Activated CD8-positive, alpha-beta memory T cell treated with anti-CD3 and anti-CD28 coated beads, Interleukin-2, amount 10 ng/mL, durations not matched to agents 7 days and 5 days (primary cell): ENCODE measurements at regions of chr19 and their contacts with region 1.

Region 1: DNA sequence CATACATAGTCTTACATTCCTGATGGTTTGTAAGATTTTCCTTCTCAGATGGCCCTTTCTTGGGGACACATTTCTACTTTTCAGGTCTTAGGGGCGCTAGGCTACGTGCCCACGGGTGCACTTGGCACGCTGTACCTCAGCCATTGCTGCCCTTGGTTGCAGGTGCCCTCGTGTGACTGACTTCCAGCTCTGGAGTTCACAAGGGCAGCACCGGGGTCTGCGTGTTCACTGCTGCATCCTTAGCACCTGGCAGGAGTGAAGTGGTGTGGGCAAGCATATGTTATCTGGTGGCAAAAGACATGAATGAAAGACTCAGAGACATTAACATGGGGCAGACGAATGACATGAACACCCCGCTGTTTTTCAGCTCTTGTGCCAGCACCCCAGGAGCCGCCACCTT is 13.3 kb upstream of the WDR88 start:
- DNase-seq: no peak
- ATAC-seq: no peak
- H3K4me3 Mint-ChIP-seq: no peak overlapping the region
- H3K27ac Mint-ChIP-seq: no peak overlapping the region
- H3K4me1 Mint-ChIP-seq: no peaks in the 10 kb centered on the region
- H3K27me3 Mint-ChIP-seq: no peaks in the 10 kb centered on the region

Region 2: DNA sequence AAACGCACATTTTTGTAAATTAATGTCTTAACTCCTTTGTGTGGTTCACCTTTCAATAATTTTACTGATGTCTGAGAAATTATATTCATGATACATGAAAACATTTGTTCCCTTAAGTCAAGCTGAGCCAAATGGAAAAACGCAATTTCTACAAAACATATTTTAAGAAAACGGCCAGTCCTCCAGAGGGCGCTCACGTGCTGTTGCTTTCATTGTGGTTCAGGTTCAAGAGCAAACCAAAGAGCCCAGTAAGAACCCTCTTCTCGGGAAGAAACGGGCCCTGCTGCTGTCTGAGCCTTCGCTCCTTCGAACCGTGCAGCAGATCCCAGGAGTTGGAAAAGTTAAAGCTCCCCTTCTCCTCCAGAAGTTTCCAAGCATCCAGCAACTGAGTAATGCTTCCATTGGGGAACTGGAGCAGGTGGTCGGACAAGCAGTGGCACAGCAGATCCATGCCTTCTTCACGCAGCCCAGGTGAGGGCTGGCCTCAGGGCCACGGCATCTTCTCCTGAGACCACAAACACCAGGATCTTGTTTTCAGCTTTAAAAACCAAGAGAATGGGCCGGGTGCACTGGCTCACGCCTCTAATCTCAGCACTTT is 142.3 kb before region 1 on chr19:
- CTCF ChIA-PET with region 1: interaction called, 32 read pairs
- DNase-seq: peak; percentile 84
- ATAC-seq: no peak
- H3K4me3 Mint-ChIP-seq: no peak overlapping the region
- H3K27ac Mint-ChIP-seq: peak overlapping the region; percentile 28
- H3K4me1 Mint-ChIP-seq: peaks cover 20% of the 10 kb centered on the region
- H3K27me3 Mint-ChIP-seq: no peaks in the 10 kb centered on the region